AG04449 (cell line): ENCODE measurements at regions of chr5 and their contacts with region 1.

Region 1: DNA sequence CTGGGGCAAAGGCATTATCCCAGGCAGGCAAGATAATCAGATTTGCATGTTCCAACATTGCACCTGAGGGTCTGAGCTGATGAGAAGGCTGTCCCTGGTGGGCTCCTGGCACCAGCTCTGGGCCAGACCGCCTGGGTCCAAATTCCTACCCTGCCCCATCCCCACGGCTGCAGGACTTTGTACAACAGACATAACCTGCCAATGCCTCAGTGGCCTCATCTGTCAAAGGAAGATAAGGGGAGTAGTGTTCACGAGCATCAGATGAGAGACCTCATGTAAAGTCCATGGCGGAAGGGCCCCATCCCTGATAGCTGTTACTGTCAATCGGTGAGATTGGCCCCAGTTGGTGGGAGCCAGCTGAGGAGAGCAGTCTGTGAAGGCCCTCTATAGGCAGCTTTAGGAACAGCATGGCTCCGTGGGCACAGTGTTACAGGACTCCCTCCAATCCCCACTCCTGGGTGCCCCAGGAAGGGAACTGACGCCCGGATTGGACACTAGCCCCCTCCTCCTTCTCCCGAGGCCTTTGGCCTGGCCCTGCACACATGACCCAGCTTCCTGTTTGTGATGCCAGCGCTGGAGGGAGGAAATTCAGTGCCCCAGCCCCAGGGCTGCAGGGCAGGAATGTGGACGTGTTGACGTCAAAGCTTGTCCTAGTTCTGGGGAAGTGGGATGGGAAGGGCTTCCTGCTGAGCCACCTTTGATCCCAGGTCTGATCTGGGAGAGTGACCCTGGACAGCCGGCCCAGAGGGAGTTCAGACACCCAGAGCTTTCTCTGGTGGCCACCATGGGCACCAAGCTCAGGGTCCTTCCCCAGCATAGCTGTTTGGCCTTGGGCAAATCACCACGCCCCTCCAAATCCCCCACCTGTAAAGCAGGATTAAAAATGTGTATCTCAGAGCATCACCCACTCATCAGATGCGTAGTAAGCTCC is 56.2 kb downstream of the DUSP1 start:
- DNase-seq: no peak
- H3K4me3 ChIP-seq: no peak overlapping the region
- CTCF ChIP-seq: peak; percentile 90

Region 2: GRCh38 chr5:172727551-172727950 is 12.8 kb after region 1 on chr5:
- CTCF ChIA-PET with region 1: interaction called, 39 read pairs
- POLR2A ChIA-PET with region 1: no interaction called
- DNase-seq: no peak
- H3K4me3 ChIP-seq: no peak overlapping the region
- CTCF ChIP-seq: no peak

Region 3: DNA sequence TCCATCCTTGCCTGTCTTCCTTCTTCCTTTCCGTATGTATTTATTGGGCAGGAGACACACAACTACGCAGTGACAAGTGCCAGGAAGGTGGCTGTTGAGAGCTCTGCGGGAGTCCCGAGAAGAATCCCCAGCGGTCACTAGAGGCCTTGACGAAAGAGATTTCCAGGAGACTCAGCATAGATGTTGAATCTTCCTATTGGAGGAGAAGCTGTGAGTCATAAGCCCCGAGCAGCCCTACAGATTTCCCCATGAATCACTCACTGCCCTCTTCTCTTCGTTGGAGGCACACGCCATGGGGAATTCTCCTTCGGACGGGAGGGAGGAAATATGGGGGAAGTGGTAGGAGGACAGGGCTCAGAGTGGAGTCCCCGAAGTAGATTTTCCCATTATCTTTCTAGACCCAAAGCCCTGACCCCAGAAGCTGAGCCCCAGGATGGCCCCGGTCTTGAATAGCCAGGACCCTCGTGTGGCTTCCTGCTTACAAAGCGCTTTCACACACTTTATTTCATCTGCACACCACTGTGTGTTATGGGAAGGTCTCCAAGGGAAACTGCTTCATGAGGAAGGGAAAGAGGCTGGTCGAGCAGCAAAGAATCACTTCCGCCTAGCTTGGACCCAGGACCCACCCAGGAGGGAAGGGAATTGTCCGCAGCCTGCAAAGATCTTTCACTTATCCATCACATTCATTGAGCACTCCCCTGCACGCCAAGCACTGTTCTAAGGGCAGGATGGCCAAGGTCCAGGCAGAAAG is 43.5 kb after region 1 on chr5:
- CTCF ChIA-PET with region 1: interaction called, 45 read pairs
- POLR2A ChIA-PET with region 1: no interaction called
- DNase-seq: peak; percentile 88
- H3K4me3 ChIP-seq: no peak overlapping the region
- CTCF ChIP-seq: no peak

Region 4: GRCh38 chr5:172868924-172869591 is 154.3 kb after region 1 on chr5:
- CTCF ChIA-PET with region 1: interaction called, 13 read pairs
- POLR2A ChIA-PET with region 1: no interaction called
- DNase-seq: peak; percentile 72
- H3K4me3 ChIP-seq: no peak overlapping the region
- CTCF ChIP-seq: peak; percentile 58

Region 5: DNA sequence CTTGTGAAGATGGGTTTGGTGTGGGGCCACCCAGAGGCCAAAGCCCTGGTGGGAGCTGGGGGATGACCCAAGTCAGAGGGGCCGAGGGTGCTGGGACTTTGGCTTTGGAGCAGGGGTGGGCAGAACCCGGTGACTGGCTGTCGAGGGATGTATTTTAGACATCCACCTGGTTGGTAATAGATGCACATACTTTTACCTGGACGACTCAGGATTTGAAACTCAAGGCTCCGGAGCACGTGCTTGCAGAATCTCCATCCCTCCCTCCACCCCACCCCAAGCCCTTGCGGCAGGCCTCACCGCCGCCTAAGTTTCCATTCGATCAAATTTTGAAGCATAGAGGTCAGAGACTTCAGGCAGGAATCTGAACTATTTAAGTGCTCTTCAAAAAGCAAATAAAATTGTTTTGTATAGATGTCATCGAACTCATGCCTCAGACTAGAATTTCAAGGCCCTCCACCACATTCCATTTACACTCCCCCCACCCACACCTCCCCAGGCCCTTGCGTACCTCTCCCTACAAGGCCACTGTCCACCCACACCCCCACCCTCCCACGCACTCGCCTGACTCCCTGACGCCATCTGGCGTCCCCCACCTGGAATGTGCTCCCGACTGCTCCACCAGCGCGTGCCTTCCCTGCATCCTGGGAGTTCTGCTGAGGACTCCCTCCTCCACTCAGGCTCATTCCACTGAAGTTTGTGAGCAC is 187.9 kb after region 1 on chr5:
- CTCF ChIA-PET with region 1: interaction called, 61 read pairs
- POLR2A ChIA-PET with region 1: no interaction called
- DNase-seq: peak; percentile 99
- H3K4me3 ChIP-seq: no peak overlapping the region
- CTCF ChIP-seq: peak; percentile 86

Region 6: DNA sequence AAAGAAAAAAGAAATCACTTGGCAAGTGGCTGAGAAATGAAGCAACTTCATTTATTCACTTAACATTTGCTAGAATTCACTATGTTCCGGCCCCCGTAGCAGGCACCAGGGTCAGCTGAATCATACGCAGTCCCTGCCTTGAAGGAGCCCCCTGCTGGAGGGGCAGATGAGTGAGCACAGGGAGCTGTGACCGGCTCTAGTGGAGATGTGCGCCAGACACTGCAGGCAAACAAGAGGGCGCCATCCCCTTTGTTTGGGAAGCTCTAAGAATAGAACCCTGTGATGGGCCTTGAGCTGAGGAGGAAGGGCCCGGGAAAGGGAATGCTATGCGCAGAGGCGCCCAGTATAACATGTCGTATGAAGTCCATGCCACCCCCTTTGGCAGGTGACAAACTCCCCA is 224.3 kb after region 1 on chr5:
- CTCF ChIA-PET with region 1: interaction called, 595 read pairs
- POLR2A ChIA-PET with region 1: no interaction called
- DNase-seq: no peak
- H3K4me3 ChIP-seq: no peak overlapping the region
- CTCF ChIP-seq: peak; percentile 58

Region 7: GRCh38 chr5:172984243-172984953 is 269.6 kb after region 1 on chr5:
- CTCF ChIA-PET with region 1: interaction called, 25 read pairs
- POLR2A ChIA-PET with region 1: no interaction called
- DNase-seq: peak; percentile 52
- H3K4me3 ChIP-seq: peak overlapping the region; percentile 99
- CTCF ChIP-seq: peak; percentile 74